AG04450 (cell line): ENCODE measurements at regions of chr15 and their contacts with region 1.

Region 1: GRCh38 chr15:88904624-88905327 is 8.4 kb downstream of the MFGE8 start:
- DNase-seq: no peak
- H3K4me3 ChIP-seq: no peak overlapping the region
- H3K27ac ChIP-seq: no peak overlapping the region
- H3K27me3 ChIP-seq: no peaks in the 10 kb centered on the region
- CTCF ChIP-seq: peak; percentile 99

Region 2: GRCh38 chr15:88745696-88746095 is 159.1 kb before region 1 on chr15:
- CTCF ChIA-PET with region 1: no interaction called
- POLR2A ChIA-PET with region 1: no interaction called
- DNase-seq: peak; percentile 18
- H3K4me3 ChIP-seq: no peak overlapping the region
- H3K27ac ChIP-seq: no peak overlapping the region
- H3K27me3 ChIP-seq: peaks cover 5% of the 10 kb centered on the region
- CTCF ChIP-seq: no peak

Region 3: DNA sequence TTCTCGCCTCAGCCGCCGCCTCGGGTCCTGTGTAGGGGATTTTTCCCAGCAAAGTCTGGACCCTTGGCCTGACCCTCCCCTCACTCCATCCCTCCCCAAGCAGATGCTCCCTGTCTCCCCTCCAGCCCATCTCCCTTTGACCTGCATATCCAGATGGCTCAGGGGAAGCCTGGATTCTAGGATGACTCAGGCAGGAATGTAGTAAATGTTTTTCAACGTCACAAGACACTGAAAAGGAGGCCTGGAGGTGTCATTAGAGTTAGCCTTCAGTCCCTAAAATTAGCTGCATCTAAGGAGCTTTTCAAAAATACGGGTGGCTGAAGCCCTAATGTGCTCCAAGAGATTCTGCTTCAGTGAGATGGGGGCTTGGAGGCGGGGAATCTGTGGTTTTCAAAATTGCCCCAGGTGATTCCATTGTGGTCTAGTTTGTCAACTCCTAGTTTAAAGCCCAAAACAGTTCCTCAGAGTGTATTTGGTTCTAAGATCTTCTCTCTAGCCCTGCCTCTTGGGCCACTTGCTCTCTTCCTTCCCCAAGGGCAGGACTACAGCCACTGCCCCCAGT is 94.3 kb before region 1 on chr15:
- CTCF ChIA-PET with region 1: no interaction called
- POLR2A ChIA-PET with region 1: no interaction called
- DNase-seq: no peak
- H3K4me3 ChIP-seq: no peak overlapping the region
- H3K27ac ChIP-seq: no peak overlapping the region
- H3K27me3 ChIP-seq: peaks cover 10% of the 10 kb centered on the region
- CTCF ChIP-seq: no peak

Region 4: GRCh38 chr15:88878720-88879184 is 26.0 kb before region 1 on chr15:
- CTCF ChIA-PET with region 1: interaction called, 11 read pairs
- POLR2A ChIA-PET with region 1: no interaction called
- DNase-seq: no peak
- H3K4me3 ChIP-seq: no peak overlapping the region
- H3K27ac ChIP-seq: no peak overlapping the region
- H3K27me3 ChIP-seq: peaks cover 1% of the 10 kb centered on the region
- CTCF ChIP-seq: peak; percentile 81

Region 5: DNA sequence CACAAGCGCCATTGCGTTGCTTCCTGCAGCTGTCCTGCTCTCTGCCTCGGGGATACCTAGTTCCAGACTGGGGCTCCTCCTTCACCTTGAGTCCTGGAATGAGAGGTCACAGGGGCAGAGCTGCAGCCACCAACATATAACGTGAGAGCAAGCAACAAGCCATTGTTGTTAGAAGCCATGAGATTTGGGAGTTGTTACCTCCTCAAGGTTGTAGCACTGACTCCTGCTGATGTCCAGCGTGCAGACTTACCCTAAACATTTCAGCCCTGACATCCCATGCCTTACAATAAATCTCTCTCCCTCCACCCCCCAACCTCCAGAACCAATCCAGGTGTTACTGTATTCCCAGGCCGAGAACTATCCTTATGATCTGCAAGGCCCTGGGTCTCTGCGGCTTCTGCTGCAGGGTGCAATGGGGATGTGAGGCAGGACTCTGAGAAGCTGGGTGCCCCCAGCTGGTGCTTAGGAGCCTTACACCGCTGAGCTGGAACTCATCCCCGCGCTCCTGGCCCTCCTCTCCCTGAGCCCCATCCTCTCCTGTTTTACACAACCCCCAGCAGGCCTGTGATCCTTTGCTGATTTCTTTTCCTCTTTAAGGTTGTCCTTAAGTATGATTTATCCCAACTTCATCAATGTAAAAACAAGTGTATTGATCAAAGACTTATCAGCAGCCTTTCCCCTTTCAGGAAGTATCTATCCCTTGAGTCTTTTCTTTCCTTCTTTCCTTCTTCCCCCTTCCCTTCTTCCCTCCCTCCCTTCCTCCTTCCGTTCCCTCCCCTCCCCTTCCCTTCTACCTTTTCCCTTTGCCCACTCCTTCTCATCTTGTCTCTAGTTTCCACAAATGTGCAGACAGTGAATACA is 99.3 kb after region 1 on chr15:
- CTCF ChIA-PET with region 1: interaction called, 74 read pairs
- POLR2A ChIA-PET with region 1: interaction called, 4 read pairs
- DNase-seq: peak; percentile 27
- H3K4me3 ChIP-seq: no peak overlapping the region
- H3K27ac ChIP-seq: no peak overlapping the region
- H3K27me3 ChIP-seq: no peaks in the 10 kb centered on the region
- CTCF ChIP-seq: peak; percentile 71

Region 6: DNA sequence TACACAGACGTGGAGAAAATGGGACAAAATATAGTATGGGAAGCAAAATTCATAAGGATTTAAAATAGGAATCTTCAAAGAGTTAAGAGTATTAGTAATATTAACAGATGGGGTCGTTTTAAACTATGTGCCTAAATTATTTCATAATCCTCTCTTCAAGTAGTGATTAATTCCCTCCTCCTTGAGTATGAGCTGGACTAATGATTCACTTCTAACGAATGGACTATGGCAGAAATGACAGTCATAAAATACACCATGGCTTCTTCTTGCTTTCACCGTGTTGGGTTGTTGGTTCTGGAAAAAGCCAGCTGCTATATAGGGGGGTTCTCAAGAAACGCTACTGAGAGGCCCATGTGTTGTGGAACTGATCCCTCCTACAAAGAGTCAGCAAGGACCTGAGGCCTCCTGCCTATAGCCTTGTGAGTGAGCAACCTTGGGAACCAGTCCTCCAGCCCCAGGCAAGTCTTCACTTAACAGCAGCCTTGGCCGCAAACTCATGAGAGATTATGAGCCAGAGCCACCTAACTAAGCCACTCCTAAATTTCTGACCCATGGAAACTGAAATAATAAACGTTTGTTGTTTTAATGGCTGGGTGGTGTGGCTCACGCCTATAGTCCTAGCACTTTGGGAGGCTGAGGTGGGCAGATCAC is 118.7 kb after region 1 on chr15:
- CTCF ChIA-PET with region 1: interaction called, 85 read pairs
- POLR2A ChIA-PET with region 1: no interaction called
- DNase-seq: no peak
- H3K4me3 ChIP-seq: no peak overlapping the region
- H3K27ac ChIP-seq: no peak overlapping the region
- H3K27me3 ChIP-seq: no peaks in the 10 kb centered on the region
- CTCF ChIP-seq: no peak

Region 7: DNA sequence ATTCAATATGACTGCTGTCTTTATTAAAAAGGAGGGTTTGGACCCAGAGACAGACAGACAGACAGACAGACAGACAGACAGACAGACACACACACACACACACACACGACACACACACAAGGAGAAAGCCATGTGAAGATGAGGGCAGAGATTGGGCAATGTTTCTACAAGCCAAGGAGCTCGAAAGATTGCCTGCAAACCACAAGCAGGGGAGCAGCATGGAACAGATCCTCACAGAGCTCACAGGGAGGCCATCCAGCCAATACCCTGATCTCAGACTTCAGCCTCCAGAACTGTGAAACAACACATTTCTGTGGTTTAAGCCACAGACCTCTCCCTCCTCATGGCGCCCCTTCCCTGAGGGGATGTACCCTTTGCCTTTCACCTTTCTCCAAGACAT is 147.7 kb after region 1 on chr15:
- CTCF ChIA-PET with region 1: interaction called, 38 read pairs
- POLR2A ChIA-PET with region 1: no interaction called
- DNase-seq: peak; percentile 83
- H3K4me3 ChIP-seq: no peak overlapping the region
- H3K27ac ChIP-seq: peak overlapping the region; percentile 84
- H3K27me3 ChIP-seq: no peaks in the 10 kb centered on the region
- CTCF ChIP-seq: no peak

Region 8: DNA sequence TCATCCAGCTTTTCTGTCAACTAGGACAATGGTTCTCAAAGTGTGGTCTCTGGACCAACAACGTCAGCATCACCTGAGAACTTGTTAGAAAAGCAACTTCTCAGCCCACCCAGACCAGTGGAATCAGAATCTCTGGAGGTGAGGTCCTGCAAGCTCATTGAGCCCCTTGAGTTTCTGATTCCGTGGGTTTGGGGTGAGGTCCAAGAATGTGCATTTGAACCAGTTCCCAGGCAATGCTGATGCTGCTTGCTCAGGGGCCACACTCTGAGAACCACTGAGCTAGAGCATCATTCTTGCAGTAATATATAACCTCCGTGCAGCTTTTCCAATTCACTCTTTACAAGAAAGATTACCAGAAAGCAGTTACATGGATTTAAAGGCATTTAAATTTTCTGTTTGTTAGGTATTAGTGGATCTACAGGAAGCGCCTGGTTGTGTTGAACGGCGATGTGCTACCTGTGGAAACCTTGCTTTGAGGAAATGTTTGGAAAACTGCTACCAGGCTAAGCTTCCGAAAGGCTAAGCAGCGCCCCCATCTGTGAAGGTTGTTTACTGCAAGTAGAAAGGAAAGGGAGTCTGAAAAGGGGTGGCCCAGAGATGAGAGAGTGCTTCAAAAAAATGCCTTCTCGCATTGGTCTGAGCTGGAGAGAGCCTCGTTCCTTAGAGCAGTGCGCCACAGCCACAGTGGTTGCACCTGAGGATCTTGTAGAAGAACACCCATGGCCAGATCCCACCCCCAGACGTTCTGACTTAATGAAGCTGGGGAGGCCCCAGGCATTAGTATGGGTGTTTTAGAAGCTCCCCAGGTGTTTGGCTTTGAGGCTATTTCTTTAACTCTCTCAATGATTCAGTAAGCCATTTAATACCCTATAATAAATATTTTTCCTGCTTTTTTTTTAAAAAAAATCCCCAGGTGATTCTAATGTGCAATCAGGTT is 266.6 kb after region 1 on chr15:
- CTCF ChIA-PET with region 1: interaction called, 58 read pairs
- POLR2A ChIA-PET with region 1: no interaction called
- DNase-seq: no peak
- H3K4me3 ChIP-seq: no peak overlapping the region
- H3K27ac ChIP-seq: no peak overlapping the region
- H3K27me3 ChIP-seq: no peaks in the 10 kb centered on the region
- CTCF ChIP-seq: peak; percentile 72